A549 (cell line): ENCODE measurements at regions of chr4 and their contacts with region 1.

Region 1: DNA sequence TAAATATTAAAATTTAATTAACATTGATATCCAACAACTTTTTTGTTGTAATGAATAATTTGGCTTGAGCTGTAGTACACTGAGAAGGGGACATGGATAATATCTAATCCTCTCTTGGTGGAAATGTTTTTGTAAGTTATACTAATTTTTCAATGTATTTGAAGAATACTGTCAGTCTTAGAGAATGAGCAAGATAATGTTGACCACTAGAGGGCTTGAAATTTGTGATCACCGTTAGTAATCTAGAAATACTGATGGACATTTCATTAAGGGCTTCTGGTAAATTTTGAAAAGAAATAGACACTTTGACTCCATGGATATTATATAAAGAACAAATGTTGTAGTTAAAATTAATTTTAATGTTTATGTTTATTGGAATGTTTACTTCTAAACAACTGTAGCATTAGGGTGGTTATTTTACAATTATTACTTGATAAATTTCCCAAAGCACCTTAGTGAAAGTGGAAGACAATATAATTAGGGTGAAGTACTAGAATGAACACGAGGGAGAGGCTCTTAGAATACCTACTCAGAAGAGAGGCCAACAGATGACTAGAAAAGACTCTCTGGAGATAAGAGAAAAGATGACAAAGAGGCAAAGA is 20.0 kb upstream of the CAMK2D start:
- DNase-seq: peak; percentile 10 to 24
- ATAC-seq: no peak
- H3K4me3 ChIP-seq: no peak overlapping the region
- H3K27ac ChIP-seq: no peak overlapping the region
- H3K4me1 ChIP-seq: peaks cover 13% of the 10 kb centered on the region
- CTCF ChIP-seq: peak; percentile 60
- EP300 ChIP-seq: no peak
- POLR2A ChIP-seq: no peak
- RAD21 ChIP-seq: peak; percentile 44 to 47; a peak in 3 of 5 replicates

Region 2: DNA sequence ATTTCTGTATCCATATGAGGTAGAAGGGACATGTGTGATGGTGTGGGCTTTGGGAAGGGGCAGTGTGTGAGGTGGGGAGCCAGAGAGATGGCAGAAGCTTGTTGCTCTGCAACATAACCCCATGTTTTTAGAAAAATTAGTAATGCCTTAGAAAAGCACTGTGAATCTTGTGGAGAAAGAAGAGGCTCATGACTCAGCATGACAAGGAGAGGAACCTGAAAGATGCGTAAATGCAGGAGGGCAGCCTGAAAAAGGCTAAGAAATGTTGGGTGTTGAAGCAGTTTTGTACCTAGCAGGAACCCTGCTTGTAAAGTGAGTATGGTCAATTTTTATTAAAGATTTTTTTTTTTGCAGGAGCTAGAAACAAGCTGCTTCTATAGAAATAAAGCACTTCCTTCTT is 138.1 kb after region 1 on chr4:
- CTCF ChIA-PET with region 1: no interaction called
- POLR2A ChIA-PET with region 1: no interaction called
- DNase-seq: no peak
- ATAC-seq: no peak
- H3K4me3 ChIP-seq: no peak overlapping the region
- H3K27ac ChIP-seq: no peak overlapping the region
- H3K4me1 ChIP-seq: peaks cover 6% of the 10 kb centered on the region; the same call in 2 of the 3 replicates
- CTCF ChIP-seq: no peak
- EP300 ChIP-seq: no peak
- POLR2A ChIP-seq: no peak
- RAD21 ChIP-seq: no peak

Region 3: DNA sequence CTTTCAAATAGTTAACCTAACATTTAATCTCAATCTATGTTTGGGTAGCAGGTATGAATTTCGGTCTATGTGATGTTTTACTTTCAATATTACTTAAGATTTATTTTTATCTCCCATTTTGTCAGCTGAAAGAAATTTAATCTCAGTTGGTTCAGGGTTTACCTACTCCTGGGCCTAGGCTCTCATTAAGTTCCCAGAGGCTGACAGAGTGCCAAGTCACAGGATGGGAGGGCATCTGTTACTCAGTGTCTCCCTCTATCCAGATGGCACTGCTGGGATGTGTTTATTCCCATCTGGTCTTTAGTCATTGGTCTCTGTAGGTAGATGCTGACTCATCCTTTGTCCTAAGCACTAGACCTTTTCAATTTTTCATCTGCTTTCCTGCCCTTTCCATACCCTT is 327.3 kb after region 1 on chr4:
- CTCF ChIA-PET with region 1: no interaction called
- POLR2A ChIA-PET with region 1: no interaction called
- DNase-seq: peak in 1 of 2 experiments; percentile 39
- ATAC-seq: peak in 1 of 2 experiments; percentile 52; a peak in 2 of 6 replicates
- H3K4me3 ChIP-seq: no peak overlapping the region
- H3K27ac ChIP-seq: 0 out of 6 replicates have a peak overlapping the region, but pooled peaks of 1 of the 2 experiments have one; percentile 4
- H3K4me1 ChIP-seq: no peaks in the 10 kb centered on the region
- CTCF ChIP-seq: no peak
- EP300 ChIP-seq: no peak
- POLR2A ChIP-seq: no peak
- RAD21 ChIP-seq: no peak

Region 4: GRCh38 chr4:114378306-114378903 is 596.9 kb after region 1 on chr4:
- CTCF ChIA-PET with region 1: interaction called, 11 read pairs
- POLR2A ChIA-PET with region 1: no interaction called
- DNase-seq: peak in 1 of 2 experiments; percentile 4
- ATAC-seq: peak in 1 of 2 experiments; percentile 51; a peak in 1 of 6 replicates
- H3K4me3 ChIP-seq: no peak overlapping the region
- H3K27ac ChIP-seq: no peak overlapping the region
- H3K4me1 ChIP-seq: no peaks in the 10 kb centered on the region
- CTCF ChIP-seq: peak; percentile 63
- EP300 ChIP-seq: no peak
- POLR2A ChIP-seq: no peak
- RAD21 ChIP-seq: peak; percentile 77 to 83